ENCODE measurements at regions of chr10 and their contacts with region 1.

Region 1: DNA sequence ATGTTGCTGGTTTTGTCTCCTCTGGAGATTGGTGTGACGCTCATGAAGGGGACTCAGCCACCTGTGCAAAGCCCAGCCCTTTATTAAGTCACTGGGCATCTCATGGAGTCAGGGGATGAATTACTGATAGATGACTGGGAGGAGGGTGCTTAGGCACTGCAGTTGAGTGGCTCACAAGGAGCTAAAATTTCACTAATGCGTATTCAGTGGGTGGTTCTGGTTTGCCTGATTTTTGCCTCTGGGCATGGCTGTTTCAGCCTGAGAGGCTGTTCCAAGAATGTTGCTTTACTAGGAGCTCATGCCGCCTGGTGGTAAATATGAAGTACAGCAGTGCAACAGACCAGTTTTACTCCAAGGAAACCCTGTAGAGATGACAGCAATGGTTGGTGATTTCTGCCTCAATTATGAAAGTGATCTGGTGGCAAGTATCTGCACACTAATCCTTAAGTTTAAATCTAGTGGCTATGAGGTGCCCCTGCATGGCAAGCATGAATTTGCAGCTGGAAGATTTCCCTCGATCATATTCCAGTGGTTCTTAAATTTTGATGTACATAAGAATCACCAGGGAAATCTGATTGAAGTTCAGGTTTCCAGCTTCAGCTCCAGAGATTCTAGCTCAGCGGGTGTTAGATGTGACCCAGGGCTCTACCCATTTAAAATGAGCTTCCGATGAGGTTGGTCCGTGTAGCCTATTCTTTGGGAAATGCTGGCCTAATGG is 19.9 kb downstream of the ACTA2 start:
- DNase-seq: peak; percentile 54 to 76
- ATAC-seq: peak; percentile 83 to 89
- H3K4me3 ChIP-seq: no peak overlapping the region
- H3K27ac ChIP-seq: peak overlapping the region; percentile 12 to 24; a peak in 2 of 6 replicates
- H3K4me1 ChIP-seq: peaks cover 8% of the 10 kb centered on the region
- CTCF ChIP-seq: peak; percentile 92
- EP300 ChIP-seq: no peak
- POLR2A ChIP-seq: no peak
- RAD21 ChIP-seq: peak; percentile 87 to 88

Region 2: DNA sequence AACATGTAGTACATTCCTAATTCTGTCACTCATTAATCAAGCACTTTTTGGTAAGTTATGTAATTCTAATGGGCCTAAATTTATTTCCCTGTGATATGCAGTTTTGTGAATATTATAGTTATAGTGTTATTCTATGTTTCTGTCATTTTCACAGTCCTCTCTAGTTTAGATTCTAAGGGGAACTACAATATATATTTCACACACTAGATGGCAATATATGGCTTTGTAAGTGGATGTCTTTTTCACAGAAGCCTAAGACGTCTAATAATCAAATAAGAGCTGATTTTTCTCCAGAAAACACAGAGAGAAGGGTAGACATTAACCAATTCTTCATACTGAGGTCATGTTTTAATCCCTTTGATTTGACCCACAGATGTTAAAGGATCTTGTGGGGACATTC is 367.6 kb before region 1 on chr10:
- CTCF ChIA-PET with region 1: interaction called, 34 read pairs
- POLR2A ChIA-PET with region 1: no interaction called
- DNase-seq: peak; percentile 15 to 39
- ATAC-seq: peak; percentile 81 to 89
- H3K4me3 ChIP-seq: no peak overlapping the region
- H3K27ac ChIP-seq: no peak overlapping the region
- H3K4me1 ChIP-seq: peaks cover 10% of the 10 kb centered on the region; the same call in 2 of the 3 replicates
- CTCF ChIP-seq: peak; percentile 64
- EP300 ChIP-seq: no peak
- POLR2A ChIP-seq: no peak
- RAD21 ChIP-seq: peak; percentile 82 to 85

Region 3: DNA sequence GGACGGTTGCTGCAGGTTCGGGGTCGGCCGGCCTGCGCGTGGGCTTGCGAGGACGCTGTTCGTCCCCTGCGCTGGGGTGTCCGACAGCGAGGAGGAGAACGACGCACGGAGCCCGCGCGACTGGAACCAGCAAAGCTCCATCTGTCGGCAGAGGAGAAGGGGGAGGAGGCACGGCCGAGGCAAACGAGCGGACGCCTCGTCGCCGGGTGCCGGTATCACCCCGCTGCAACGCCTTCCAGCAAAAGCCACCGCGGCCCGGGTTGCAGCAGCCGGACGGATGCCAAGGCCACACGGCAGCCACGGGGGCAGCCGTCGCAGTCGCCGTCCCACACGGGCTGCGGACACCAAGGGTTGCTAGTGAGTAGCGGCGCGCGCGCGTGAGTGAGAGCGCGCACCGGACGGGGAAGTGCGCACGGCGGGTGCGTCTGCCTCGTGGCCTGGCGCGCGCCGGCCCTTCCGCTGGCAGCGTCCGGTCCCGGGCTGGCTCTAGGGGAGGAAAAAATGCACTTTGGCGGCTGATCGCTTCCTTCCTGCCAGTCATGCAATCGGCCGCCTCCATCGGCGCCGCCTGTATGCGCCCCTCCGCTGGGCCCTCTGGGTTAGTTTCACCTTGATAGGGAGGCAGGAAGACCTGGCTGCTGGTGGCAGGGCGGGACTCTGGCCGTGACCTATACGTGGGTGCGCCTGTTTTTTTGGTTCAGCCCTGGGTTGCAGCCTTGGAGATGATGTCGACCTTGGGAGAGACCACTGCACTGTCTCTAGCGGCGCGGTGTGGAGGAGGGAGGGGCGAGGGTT is 52.2 kb before region 1 on chr10:
- CTCF ChIA-PET with region 1: interaction called, 18 read pairs
- POLR2A ChIA-PET with region 1: interaction called, 8 read pairs
- DNase-seq: peak; percentile 69 to 86
- ATAC-seq: peak; percentile 90 to 92
- H3K4me3 ChIP-seq: peak overlapping the region; percentile 49
- H3K27ac ChIP-seq: peak overlapping the region; percentile 97 to 98
- H3K4me1 ChIP-seq: peaks cover 33% of the 10 kb centered on the region
- CTCF ChIP-seq: peak; percentile 37; the same call in 2 of the 3 replicates
- EP300 ChIP-seq: no peak
- POLR2A ChIP-seq: peak; percentile 53
- RAD21 ChIP-seq: 0 out of 5 replicates have a peak, but pooled peaks of 1 of the 2 experiments have one; percentile 13

Region 4: GRCh38 chr10:88901206-88901983 is 31.3 kb before region 1 on chr10:
- CTCF ChIA-PET with region 1: interaction called, 63 read pairs
- POLR2A ChIA-PET with region 1: no interaction called
- DNase-seq: no peak
- ATAC-seq: no peak
- H3K4me3 ChIP-seq: no peak overlapping the region
- H3K27ac ChIP-seq: no peak overlapping the region
- H3K4me1 ChIP-seq: peaks cover 43% of the 10 kb centered on the region
- CTCF ChIP-seq: no peak
- EP300 ChIP-seq: no peak
- POLR2A ChIP-seq: no peak
- RAD21 ChIP-seq: no peak

Region 5: GRCh38 chr10:88944813-88945212 is 12.1 kb after region 1 on chr10:
- CTCF ChIA-PET with region 1: interaction called, 93 read pairs
- POLR2A ChIA-PET with region 1: no interaction called
- DNase-seq: no peak
- ATAC-seq: no peak
- H3K4me3 ChIP-seq: no peak overlapping the region
- H3K27ac ChIP-seq: no peak overlapping the region
- H3K4me1 ChIP-seq: no peaks in the 10 kb centered on the region
- CTCF ChIP-seq: no peak
- EP300 ChIP-seq: no peak
- POLR2A ChIP-seq: no peak
- RAD21 ChIP-seq: no peak

Region 6: GRCh38 chr10:88990384-88991160 is 57.9 kb after region 1 on chr10 and contains the start of gene FAS:
- CTCF ChIA-PET with region 1: interaction called, 32 read pairs
- POLR2A ChIA-PET with region 1: no interaction called
- DNase-seq: peak; percentile 66 to 69
- ATAC-seq: peak; percentile 89 to 92
- H3K4me3 ChIP-seq: peak within 1 kb of the TSS; percentile 59
- H3K27ac ChIP-seq: peak within 1 kb of the TSS; percentile 85 to 96
- H3K4me1 ChIP-seq: peaks cover 31% of the 10 kb centered on the region; the same call in 2 of the 3 replicates
- CTCF ChIP-seq: no peak
- EP300 ChIP-seq: no peak
- POLR2A ChIP-seq: 0 out of 2 replicates have a peak, but pooled peaks have one; percentile 33
- RAD21 ChIP-seq: no peak
- polyA plus RNA-seq, gene FAS: 29.5 and 30.1 TPM in 2 replicates

Region 7: GRCh38 chr10:89207181-89207800 is 274.6 kb after region 1 on chr10 and contains the start of gene CH25H:
- CTCF ChIA-PET with region 1: interaction called, 24 read pairs
- POLR2A ChIA-PET with region 1: no interaction called
- DNase-seq: peak; percentile 39 to 46
- ATAC-seq: peak; percentile 86 to 88
- H3K4me3 ChIP-seq: peak within 1 kb of the TSS; percentile 49
- H3K27ac ChIP-seq: peak within 1 kb of the TSS; percentile 21 to 34; a peak in 2 of 6 replicates
- H3K4me1 ChIP-seq: peaks cover 7% of the 10 kb centered on the region; the same call in 1 of the 3 replicates
- CTCF ChIP-seq: no peak
- EP300 ChIP-seq: no peak
- POLR2A ChIP-seq: no peak
- RAD21 ChIP-seq: no peak
- polyA plus RNA-seq, gene CH25H: 0.05 TPM in 1 of 2 replicates, not detected in the other

Measured in A549 (cell line).